CD8-positive, alpha-beta memory T cell (primary cell): ENCODE measurements at regions of chr14 and their contacts with region 1.

Region 1: DNA sequence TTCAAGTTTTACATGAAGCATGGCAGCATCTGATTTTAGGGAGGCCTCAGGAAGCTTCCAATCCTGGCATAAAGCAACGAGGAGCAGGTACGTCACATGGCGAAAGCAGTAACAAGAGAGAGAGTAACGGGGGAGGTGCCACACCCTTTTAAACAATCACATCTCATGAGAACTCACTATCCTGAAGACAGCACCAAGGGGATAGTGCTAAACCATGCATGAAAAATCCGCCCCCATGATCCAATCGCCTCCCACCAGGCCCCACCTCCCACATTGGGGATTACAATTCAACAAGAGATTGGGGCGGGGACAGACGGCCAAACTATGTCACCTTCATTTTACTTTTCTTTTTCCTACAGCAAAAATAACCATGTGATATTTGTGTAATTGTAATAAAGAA is 7.2 kb upstream of the MAP3K9 start:
- DNase-seq: no peak
- H3K4me3 ChIP-seq: no peak overlapping the region
- H3K4me3 Mint-ChIP-seq: no peak overlapping the region
- H3K27ac ChIP-seq: no peak overlapping the region
- H3K27ac Mint-ChIP-seq: no peak overlapping the region
- H3K4me1 ChIP-seq: peaks cover 16% of the 10 kb centered on the region
- H3K4me1 Mint-ChIP-seq: peaks cover 7 to 11% (median 8%) of the 10 kb centered on the region in 3 donors
- H3K27me3 ChIP-seq: peaks cover 6% of the 10 kb centered on the region
- H3K27me3 Mint-ChIP-seq: no peaks in the 10 kb centered on the region

Region 2: DNA sequence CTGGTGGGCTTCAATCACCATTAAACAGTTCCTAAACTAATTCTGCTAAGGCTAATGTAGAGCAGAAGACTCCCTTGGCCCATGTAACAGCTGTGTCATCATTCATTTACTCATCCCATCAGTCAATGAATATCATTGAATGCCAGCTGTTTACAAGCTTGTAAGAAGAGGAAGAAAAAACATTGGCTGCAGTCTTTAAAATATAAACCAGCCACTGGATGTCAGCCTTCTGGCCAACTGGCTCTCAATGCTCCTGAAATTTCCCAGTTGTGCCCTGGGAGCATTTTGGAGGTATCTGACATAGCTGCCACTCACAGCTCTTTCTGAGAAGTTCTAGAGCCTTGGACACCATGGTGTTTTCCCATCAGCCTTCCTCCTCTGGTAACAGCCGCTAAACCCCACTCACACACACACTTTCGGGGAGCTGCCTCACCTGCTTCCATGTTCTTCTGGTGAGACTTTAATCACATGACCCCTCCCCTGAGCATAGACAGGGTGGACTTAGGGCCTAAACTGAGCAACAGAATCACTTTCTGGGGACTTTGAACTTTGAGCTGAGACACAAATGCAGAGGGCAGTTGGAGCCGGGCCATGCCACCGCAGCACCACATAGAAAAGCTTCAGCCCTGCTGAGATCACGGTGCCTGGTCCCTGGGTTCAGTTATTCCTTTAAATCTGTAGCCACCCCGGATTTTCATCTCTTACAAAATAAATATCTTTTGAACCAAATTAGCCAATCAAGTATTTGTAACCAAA is 11.0 kb after region 1 on chr14:
- CTCF ChIA-PET with region 1: interaction called, 28 read pairs
- POLR2A ChIA-PET with region 1: no interaction called
- DNase-seq: no peak
- H3K4me3 ChIP-seq: no peak overlapping the region
- H3K4me3 Mint-ChIP-seq: peak overlapping the region in 1 of 7 donors; percentile 24
- H3K27ac ChIP-seq: no peak overlapping the region
- H3K27ac Mint-ChIP-seq: peak overlapping the region in 1 of 8 donors; percentile 5
- H3K4me1 ChIP-seq: peaks cover 4% of the 10 kb centered on the region
- H3K4me1 Mint-ChIP-seq: peaks cover 7 to 13% (median 9%) of the 10 kb centered on the region in 3 donors
- H3K27me3 ChIP-seq: no peaks in the 10 kb centered on the region
- H3K27me3 Mint-ChIP-seq: peaks cover 3% of the 10 kb centered on the region in 2 donors

Region 3: DNA sequence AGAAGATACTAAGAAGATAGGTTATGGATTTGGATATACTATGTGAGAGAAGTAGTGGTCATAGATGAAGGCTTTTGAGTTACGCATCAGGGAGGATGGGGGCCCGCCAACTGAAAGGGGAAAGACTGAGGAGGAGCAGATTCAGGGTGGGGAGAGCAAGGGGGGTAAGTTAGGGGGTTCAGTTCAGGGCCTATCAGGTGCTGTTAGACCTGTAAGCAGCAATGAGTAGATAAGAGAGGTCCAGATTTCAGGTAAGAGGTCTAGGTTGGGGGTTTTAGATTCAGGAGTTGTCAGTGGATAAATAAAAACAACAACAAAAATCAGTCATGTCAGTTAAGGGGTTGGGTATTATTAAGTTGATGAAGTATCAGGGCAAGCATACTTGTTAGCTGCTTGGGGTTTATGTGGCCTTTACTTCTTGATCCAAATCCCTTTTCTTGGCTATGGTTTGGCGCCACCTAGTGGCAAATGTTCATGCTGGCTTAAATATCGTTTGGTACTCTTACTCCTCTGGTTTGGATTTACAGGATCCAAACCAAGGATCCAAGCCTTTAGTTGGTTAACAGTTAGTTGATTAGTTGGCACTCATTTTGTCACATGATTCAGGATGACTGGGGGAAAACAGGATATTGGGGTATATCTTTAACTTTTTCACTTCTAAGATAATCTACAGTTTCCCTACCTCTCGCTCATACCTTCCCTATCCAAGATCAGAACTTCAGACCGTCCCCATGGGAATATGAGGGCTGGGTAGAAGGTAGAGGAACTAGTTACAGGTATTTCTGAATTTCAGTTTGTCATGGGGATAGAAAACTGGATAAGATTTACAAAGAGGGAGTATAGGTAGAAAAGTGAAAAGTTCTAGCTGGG is 155.8 kb after region 1 on chr14:
- CTCF ChIA-PET with region 1: interaction called, 22 read pairs
- POLR2A ChIA-PET with region 1: no interaction called
- DNase-seq: peak; percentile 64 to 86 (median 77)
- H3K4me3 ChIP-seq: no peak overlapping the region
- H3K4me3 Mint-ChIP-seq: no peak overlapping the region
- H3K27ac ChIP-seq: no peak overlapping the region
- H3K27ac Mint-ChIP-seq: peak overlapping the region; percentile 5 to 94 (median 44)
- H3K4me1 ChIP-seq: peaks cover 34% of the 10 kb centered on the region
- H3K4me1 Mint-ChIP-seq: peaks cover 45 to 71% (median 56%) of the 10 kb centered on the region in 3 donors
- H3K27me3 ChIP-seq: no peaks in the 10 kb centered on the region
- H3K27me3 Mint-ChIP-seq: no peaks in the 10 kb centered on the region

Region 4: DNA sequence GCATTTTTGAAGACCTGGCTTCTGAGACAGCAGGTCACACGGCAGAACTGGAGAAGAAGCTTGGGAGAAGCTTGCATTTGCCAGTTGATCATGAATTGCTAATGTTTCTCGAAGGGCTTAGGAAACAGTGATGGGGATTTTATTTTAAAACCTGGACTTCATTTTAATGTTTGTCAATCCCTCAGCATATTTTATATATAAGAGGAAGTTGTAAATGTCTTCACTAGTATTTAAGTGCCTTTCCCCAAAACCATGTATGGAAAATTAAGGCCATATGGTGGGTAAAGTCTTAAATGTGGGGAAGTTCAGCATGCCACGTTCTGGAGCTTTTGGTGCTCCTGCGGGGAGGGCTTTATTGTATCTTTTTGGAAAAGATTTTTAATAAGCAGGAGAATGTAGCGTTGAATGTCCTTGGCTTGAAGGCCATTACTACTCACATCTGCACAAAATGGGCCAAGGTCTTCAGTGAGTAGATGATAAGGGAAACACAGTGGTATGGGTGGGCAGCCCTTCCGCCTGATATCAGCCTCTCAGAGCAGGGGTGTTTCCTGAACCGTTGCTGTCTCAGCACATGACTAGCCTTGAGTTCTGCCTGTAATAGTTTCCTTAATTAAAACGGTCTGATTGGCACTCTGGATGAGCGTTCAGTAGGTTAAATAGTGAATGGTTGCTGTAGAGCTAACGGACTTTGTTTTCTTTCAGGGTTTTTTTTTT is 602.2 kb after region 1 on chr14:
- CTCF ChIA-PET with region 1: no interaction called
- POLR2A ChIA-PET with region 1: no interaction called
- DNase-seq: no peak
- H3K4me3 ChIP-seq: no peak overlapping the region
- H3K4me3 Mint-ChIP-seq: no peak overlapping the region
- H3K27ac ChIP-seq: no peak overlapping the region
- H3K27ac Mint-ChIP-seq: peak overlapping the region in 2 of 8 donors; percentile 11 to 50
- H3K4me1 ChIP-seq: no peaks in the 10 kb centered on the region
- H3K4me1 Mint-ChIP-seq: no peaks in the 10 kb centered on the region
- H3K27me3 ChIP-seq: no peaks in the 10 kb centered on the region
- H3K27me3 Mint-ChIP-seq: no peaks in the 10 kb centered on the region